Heart right ventricle (tissue), 16 donors: ENCODE measurements at regions of chr15 and their contacts with region 1.

Region 1: DNA sequence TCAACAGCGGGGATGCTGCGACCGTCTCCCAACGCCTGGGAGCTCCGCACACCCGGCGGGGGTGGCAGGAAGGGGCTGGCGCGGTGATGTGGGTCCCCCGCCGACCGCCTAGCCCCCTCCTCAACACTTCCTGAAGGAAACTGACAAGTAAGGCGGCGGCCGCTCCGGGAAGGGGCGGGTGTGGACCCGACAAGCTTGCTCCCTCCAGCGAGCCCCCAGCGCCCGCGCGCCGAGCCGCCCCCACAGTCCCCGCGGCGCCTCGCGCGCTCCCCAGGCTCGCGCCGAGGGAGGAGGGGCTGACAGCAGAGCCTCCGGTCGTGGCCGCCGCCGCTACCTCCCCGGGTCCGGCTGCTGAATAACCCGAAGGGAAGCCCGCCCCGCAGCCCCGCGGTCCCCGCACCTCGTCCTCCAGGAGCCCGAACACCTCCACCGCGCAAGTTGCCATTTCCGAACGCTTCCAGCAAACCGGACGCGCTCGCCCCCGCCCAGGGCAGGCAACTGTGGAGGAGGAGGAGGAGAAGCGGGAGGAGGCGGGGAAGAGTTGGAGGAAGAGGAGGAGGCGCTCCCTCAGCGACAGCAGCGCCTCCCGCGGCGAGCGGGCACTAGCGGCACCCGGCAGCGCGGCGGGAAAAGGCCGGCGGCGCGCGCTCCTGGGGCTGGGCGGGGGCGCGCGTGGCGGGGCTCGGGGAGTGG is at the start of gene NEDD4:
- DNase-seq: peak; percentile 87 to 91
- ATAC-seq: peak; percentile 93 to 98 (median 96)
- H3K4me3 ChIP-seq: peak within 1 kb of the TSS; percentile 66 to 95 (median 92)
- H3K27ac ChIP-seq: peak within 1 kb of the TSS; percentile 92 to 99 (median 96)
- H3K4me1 ChIP-seq: peaks cover 0 to 36% (median 24%) of the 10 kb centered on the region in 9 donors
- H3K27me3 ChIP-seq: no peaks in the 10 kb centered on the region
- CTCF ChIP-seq: peak; percentile 36 to 76 (median 60)
- total RNA-seq, gene NEDD4: 6.8 to 11.5 (median 8.9) TPM

Region 2: DNA sequence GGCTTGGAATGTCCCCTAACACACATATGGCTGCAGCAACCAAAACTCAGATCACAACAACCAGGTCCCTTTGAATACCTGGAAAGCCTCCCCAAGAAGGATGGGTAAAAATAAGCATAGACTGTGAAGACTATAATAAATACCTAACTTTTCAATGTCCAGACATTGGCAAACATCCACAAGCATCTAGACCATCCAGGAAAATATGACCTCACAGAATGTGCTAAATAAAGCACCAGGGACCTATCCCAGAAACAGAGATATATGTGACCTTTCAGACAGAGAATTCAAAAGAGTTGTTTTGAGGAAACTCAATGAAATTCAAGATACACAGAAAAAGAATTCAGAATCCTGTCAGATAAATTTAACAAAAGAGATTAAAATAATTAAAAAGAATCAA is 109.0 kb before region 1 on chr15:
- intact Hi-C with region 1: no loop called
- DNase-seq: peak in 1 of 2 donors; percentile 8
- ATAC-seq: peak in 5 of 8 donors; percentile 56 to 92 (median 57)
- H3K4me3 ChIP-seq: no peak overlapping the region
- H3K27ac ChIP-seq: peak overlapping the region in 1 of 10 donors; percentile 38
- H3K4me1 ChIP-seq: peaks cover 0 to 18% (median 9%) of the 10 kb centered on the region in 9 donors
- H3K27me3 ChIP-seq: no peaks in the 10 kb centered on the region
- CTCF ChIP-seq: no peak

Region 3: GRCh38 chr15:55897560-55898336 is 95.5 kb before region 1 on chr15:
- intact Hi-C with region 1: loop called in 1 of 10 experiments (anchors 5 kb)
- DNase-seq: peak; percentile 29 to 54
- ATAC-seq: peak; percentile 72 to 97 (median 87)
- H3K4me3 ChIP-seq: peak overlapping the region in 4 of 10 donors; percentile 5 to 12 (median 11)
- H3K27ac ChIP-seq: peak overlapping the region in 9 of 10 donors; percentile 25 to 87 (median 74)
- H3K4me1 ChIP-seq: peaks cover 0 to 38% (median 15%) of the 10 kb centered on the region in 9 donors
- H3K27me3 ChIP-seq: no peaks in the 10 kb centered on the region
- CTCF ChIP-seq: peak; percentile 67 to 90 (median 84)

Region 4: GRCh38 chr15:55917881-55918296 is 75.4 kb before region 1 on chr15:
- intact Hi-C with region 1: loop called in 1 of 10 experiments (anchors 10 kb)
- DNase-seq: peak in 1 of 2 donors; percentile 13
- ATAC-seq: peak in 2 of 8 donors; percentile 34 to 44
- H3K4me3 ChIP-seq: no peak overlapping the region
- H3K27ac ChIP-seq: no peak overlapping the region
- H3K4me1 ChIP-seq: peaks cover 0 to 11% (median 3%) of the 10 kb centered on the region in 9 donors
- H3K27me3 ChIP-seq: no peaks in the 10 kb centered on the region
- CTCF ChIP-seq: peak in 8 of 9 donors; percentile 33 to 72 (median 58)

Region 5: DNA sequence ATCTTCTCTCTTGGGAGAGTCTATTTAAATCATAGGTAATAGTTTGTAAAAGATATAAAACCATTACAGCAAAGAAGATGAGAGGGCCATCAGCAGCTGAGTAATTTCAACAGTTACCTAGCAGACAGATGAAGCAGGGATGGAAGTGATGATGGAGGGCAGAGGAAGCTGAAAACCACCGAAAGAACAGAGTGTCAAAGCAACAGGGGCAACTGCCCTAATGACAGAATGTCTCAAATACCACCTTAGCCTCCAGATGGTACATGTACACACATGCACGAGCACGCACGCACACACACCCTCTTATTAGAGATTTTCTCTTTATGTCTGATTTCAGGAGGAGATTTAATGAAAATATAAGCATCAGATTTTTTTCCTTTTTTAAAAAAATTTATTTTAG is 64.3 kb before region 1 on chr15:
- intact Hi-C with region 1: no loop called
- DNase-seq: no peak
- ATAC-seq: no peak
- H3K4me3 ChIP-seq: no peak overlapping the region
- H3K27ac ChIP-seq: no peak overlapping the region
- H3K4me1 ChIP-seq: no peaks in the 10 kb centered on the region
- H3K27me3 ChIP-seq: no peaks in the 10 kb centered on the region
- CTCF ChIP-seq: no peak

Region 6: DNA sequence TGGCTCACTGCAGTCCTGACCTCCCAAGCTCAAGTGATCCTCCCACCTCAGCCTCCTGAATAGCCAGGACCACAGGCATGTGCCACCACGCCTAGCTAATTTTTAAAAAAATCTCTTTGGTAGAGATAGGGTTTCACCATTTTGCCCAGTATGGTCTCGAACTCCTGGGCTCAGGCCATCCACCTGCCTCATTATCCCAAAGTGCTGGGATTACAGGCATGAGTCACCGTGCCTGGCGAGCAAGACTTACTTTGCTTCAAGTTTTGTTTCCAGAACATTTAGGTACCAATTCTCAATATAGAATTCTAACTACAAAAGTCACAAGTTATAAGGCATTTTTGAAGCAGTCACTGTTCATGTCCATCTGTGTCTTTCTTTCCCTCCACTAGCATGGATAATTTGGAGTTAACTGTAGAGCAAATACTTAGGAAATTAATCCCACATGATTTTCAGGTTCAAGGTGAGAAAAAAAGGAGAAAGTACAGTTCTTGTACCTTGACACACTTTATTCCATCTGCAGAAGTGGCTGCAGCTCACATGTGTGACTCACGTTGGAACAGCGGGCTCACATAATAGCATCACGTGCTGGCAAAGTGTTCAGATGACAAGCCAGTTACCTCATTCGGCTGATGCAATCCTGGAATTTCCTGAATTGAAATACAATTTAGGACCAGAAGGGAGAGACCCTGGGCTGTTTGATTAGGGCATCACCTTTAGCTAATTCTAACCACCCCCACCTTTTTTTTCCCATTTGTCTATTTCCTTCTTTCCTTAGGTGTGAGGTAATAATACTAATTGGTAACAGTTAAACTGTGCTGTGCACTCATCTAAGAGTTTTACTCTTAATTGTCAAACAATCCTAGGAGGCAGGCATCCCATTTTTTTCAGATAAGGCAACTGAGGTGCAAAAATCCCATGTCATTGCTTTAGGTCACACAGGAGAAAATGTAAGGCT is 47.1 kb after region 1 on chr15:
- intact Hi-C with region 1: loop called in 2 of 10 experiments (anchors 5 kb)
- DNase-seq: peak; percentile 13 to 51
- ATAC-seq: peak; percentile 63 to 89 (median 76)
- H3K4me3 ChIP-seq: no peak overlapping the region
- H3K27ac ChIP-seq: peak overlapping the region in 4 of 10 donors; percentile 10 to 49 (median 24)
- H3K4me1 ChIP-seq: peaks cover 0 to 20% (median 13%) of the 10 kb centered on the region in 9 donors
- H3K27me3 ChIP-seq: no peaks in the 10 kb centered on the region
- CTCF ChIP-seq: no peak

Region 7: GRCh38 chr15:56052395-56053045 is 59.3 kb after region 1 on chr15:
- intact Hi-C with region 1: loop called in 2 of 10 experiments (anchors 5 kb)
- DNase-seq: no peak
- ATAC-seq: no peak
- H3K4me3 ChIP-seq: no peak overlapping the region
- H3K27ac ChIP-seq: no peak overlapping the region
- H3K4me1 ChIP-seq: no peaks in the 10 kb centered on the region
- H3K27me3 ChIP-seq: no peaks in the 10 kb centered on the region
- CTCF ChIP-seq: peak; percentile 60 to 84 (median 76)

Region 8: DNA sequence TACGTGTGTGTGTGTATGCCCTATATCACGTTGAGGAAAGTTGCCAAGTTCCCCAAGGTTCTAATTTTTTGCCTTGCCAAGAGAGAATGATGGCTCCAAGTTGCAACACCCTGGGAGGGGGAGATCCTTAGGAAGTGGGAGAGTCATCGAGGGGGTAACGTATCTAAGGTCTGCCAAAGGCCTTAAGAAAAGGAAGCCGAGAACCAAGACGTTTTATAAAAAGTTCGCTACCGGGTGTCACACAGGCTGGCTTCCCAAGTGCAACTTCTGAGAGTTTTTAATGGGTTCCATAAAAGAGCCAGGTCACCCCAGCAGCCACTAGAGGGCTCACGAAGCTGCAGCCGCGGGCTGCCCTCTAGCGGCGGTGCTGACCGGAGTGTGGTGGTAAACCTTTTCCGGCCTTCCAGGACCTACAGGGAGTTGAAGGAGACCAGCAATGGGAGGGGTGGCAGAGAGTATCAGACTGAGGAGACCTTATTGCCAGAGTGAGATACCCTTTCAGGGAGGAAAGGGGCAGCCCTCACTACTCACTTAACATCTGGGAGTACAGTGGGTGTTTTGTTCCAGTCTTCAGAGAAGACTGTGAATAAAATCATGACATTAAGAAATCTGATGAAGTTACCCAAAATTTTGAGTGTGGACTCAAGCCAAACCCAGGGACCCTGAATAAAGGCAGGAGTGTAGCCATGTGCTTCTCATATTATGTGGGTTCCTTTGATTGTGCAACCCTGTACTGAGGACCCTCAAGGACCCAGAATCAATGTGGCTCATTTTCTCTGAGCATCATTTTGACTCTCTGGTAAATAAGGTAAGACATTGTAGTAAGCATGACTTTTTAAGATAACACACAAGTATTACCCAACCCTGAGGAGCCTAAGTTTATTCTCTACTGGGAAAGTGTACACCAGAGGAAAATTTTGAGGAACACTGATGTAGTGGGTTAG is 252.9 kb after region 1 on chr15:
- intact Hi-C with region 1: loop called in 6 of 10 experiments (anchors 5 to 10 kb)
- DNase-seq: peak; percentile 88 to 89
- ATAC-seq: peak; percentile 56 to 90 (median 86)
- H3K4me3 ChIP-seq: peak overlapping the region in 8 of 10 donors; percentile 15 to 78 (median 47)
- H3K27ac ChIP-seq: peak overlapping the region in 7 of 10 donors; percentile 39 to 95 (median 67)
- H3K4me1 ChIP-seq: peaks cover 3 to 40% (median 25%) of the 10 kb centered on the region in 9 donors
- H3K27me3 ChIP-seq: no peaks in the 10 kb centered on the region
- CTCF ChIP-seq: peak; percentile 98 to 100 (median 100)